H1 (cell line): ENCODE measurements at regions of chr6 and their contacts with region 1.

Region 1: DNA sequence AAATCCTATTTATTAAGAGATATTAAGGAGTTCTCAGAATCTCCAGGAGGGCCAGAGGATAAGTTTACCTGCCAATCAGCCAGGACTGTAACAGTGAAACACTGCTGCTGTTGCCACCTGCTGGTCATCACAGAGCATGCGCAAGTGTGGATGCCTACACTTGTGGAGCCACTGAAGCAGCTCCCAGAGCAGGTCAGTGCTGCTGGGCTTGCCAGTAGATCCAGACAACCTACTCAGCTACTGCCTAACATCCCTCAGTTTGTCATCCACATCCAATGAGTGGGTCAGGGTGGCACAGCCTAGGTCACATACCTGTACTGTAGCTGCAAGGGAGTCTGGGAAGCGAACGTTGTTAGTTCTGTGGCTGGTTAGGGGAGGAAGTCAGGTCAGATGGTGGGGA is 18.3 kb upstream of the NHSL1 start:
- DNase-seq: peak; percentile 39 to 70
- H3K4me3 ChIP-seq: no peak overlapping the region
- H3K27ac ChIP-seq: no peak overlapping the region
- H3K4me1 ChIP-seq: peaks cover 0 to 3% (median under 1%) of the 10 kb centered on the region in 4 experiments; a peak in 3 of 7 replicates
- H3K27me3 ChIP-seq: no peaks in the 10 kb centered on the region
- CTCF ChIP-seq: peak; percentile 74 to 97 (median 93)
- EP300 ChIP-seq: no peak
- POLR2A ChIP-seq: no peak
- RAD21 ChIP-seq: peak; percentile 66 to 75

Region 2: GRCh38 chr6:138499303-138500018 is 18.2 kb before region 1 on chr6 and contains the start of gene NHSL1:
- CTCF ChIA-PET with region 1: interaction called, 14 read pairs
- POLR2A ChIA-PET with region 1: no interaction called
- DNase-seq: no peak
- H3K4me3 ChIP-seq: peak within 1 kb of the TSS; percentile 26 to 60 (median 45); a peak in 7 of 8 replicates
- H3K27ac ChIP-seq: peak within 1 kb of the TSS; percentile 56; the same call in 1 of the 2 replicates
- H3K4me1 ChIP-seq: peaks cover 5 to 21% (median 17%) of the 10 kb centered on the region in 4 experiments
- H3K27me3 ChIP-seq: no peaks in the 10 kb centered on the region
- CTCF ChIP-seq: no peak
- EP300 ChIP-seq: no peak
- POLR2A ChIP-seq: peak in 1 of 2 experiments; percentile 49; a peak in 1 of 3 replicates
- RAD21 ChIP-seq: no peak
- total RNA-seq, gene NHSL1: 27.2 and 32.4 TPM in 2 replicates

Region 3: GRCh38 chr6:138538390-138539031 is 20.9 kb after region 1 on chr6:
- CTCF ChIA-PET with region 1: interaction called, 11 read pairs
- POLR2A ChIA-PET with region 1: no interaction called
- DNase-seq: no peak
- H3K4me3 ChIP-seq: no peak overlapping the region
- H3K27ac ChIP-seq: no peak overlapping the region
- H3K4me1 ChIP-seq: peaks cover 0 to 15% (median 8%) of the 10 kb centered on the region in 4 experiments; a peak in 5 of 7 replicates
- H3K27me3 ChIP-seq: no peaks in the 10 kb centered on the region
- CTCF ChIP-seq: no peak
- EP300 ChIP-seq: no peak
- POLR2A ChIP-seq: no peak
- RAD21 ChIP-seq: no peak